IMR-90 (cell line): ENCODE measurements at regions of chr4 and their contacts with region 1.

Region 1: GRCh38 chr4:145936142-145936996 is 2.3 kb downstream of the ZNF827 start:
- DNase-seq: peak; percentile 73
- ATAC-seq: peak; percentile 44
- H3K4me3 ChIP-seq: peak overlapping the region; percentile 82
- H3K27ac ChIP-seq: peak overlapping the region; percentile 97
- H3K4me1 ChIP-seq: peaks cover 5% of the 10 kb centered on the region
- H3K27me3 ChIP-seq: no peaks in the 10 kb centered on the region
- CTCF ChIP-seq: peak; percentile 29
- POLR2A ChIP-seq: no peak
- RAD21 ChIP-seq: peak; percentile 10; the same call in 1 of the 2 replicates

Region 2: DNA sequence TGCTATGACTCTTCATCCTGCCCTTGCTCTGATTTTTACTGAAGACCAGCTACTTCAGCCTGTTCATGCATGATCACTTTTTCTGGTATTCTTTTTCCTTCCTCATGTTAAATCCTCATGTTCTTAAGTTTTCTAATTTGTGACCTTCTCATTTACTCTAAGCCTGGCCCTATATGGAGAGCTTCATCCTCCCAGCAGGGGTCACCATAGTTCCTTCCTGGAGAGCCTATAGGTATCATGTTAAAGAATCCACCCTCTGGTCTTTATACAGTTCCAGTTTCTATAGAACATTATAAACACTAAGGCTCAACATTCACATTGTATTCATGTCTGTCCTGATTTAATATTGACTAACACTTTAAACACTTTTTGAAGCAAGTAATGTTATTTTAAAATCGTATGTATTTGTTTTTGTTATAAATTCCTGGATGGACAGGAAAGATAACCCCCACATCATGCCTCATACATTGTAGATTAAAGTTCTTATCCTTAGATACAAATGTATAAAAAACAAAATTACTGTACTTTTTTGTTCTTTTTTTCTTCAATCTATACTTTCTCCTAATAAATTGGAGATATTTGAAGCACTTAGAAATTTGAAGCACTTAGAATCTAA is 702.2 kb before region 1 on chr4:
- CTCF ChIA-PET with region 1: no interaction called
- POLR2A ChIA-PET with region 1: no interaction called
- dilution Hi-C with region 1: no loop called
- in situ Hi-C with region 1: no loop called
- intact Hi-C with region 1: loop called (anchors 10 kb)
- DNase-seq: peak; percentile 67
- ATAC-seq: peak; percentile 93
- H3K4me3 ChIP-seq: no peak overlapping the region
- H3K27ac ChIP-seq: no peak overlapping the region
- H3K4me1 ChIP-seq: 0 out of 2 replicates have a peak, but pooled peaks cover 1% of the 10 kb centered on the region
- H3K27me3 ChIP-seq: no peaks in the 10 kb centered on the region
- CTCF ChIP-seq: peak; percentile 88
- POLR2A ChIP-seq: no peak
- RAD21 ChIP-seq: peak; percentile 83

Region 3: GRCh38 chr4:145679520-145679919 is 256.8 kb before region 1 on chr4:
- CTCF ChIA-PET with region 1: no interaction called
- POLR2A ChIA-PET with region 1: no interaction called
- dilution Hi-C with region 1: no loop called
- in situ Hi-C with region 1: no loop called
- intact Hi-C with region 1: loop called (anchors 5 kb)
- DNase-seq: peak; percentile 97
- ATAC-seq: peak; percentile 97
- H3K4me3 ChIP-seq: no peak overlapping the region
- H3K27ac ChIP-seq: no peak overlapping the region
- H3K4me1 ChIP-seq: peaks cover 2% of the 10 kb centered on the region; the same call in 1 of the 2 replicates
- H3K27me3 ChIP-seq: no peaks in the 10 kb centered on the region
- CTCF ChIP-seq: no peak
- POLR2A ChIP-seq: 0 out of 2 replicates have a peak, but pooled peaks have one; percentile 10
- RAD21 ChIP-seq: no peak

Region 4: GRCh38 chr4:145732895-145733880 is 203.2 kb before region 1 on chr4:
- CTCF ChIA-PET with region 1: no interaction called
- POLR2A ChIA-PET with region 1: no interaction called
- dilution Hi-C with region 1: no loop called
- in situ Hi-C with region 1: no loop called
- intact Hi-C with region 1: loop called (anchors 1 kb)
- DNase-seq: peak; percentile 89
- ATAC-seq: peak; percentile 80
- H3K4me3 ChIP-seq: peak overlapping the region; percentile 57
- H3K27ac ChIP-seq: peak overlapping the region; percentile 92
- H3K4me1 ChIP-seq: peaks cover 28% of the 10 kb centered on the region
- H3K27me3 ChIP-seq: no peaks in the 10 kb centered on the region
- CTCF ChIP-seq: no peak
- POLR2A ChIP-seq: peak; percentile 75
- RAD21 ChIP-seq: no peak

Region 5: DNA sequence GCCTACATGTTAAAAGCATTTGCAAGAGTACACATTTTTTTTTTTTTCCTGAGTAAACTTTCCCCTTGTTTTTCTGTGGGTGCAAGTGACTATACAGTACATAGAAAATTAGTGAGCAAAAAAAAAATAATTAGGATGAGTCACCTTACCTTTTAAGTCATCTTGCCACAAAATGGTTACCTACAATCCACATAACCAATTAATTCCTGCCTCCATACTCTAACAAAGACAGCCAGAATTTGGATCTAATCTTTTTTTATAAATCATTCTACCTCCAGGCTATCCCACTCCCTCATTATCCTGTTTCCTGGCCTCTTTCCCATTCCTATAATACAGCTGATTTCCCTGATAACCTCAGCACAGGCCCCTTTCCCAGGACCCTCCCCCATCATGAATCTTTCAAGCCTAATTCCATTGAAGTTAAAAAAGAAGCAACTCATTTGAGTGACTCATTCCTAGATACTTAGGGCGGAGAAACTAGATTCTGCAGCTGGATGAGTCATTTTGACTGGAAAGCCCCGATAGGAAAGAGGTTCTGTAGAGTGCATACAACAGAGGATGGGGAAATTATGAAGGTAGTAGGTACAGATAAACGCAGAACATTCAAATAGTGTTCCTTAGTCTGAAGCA is 128.2 kb before region 1 on chr4:
- CTCF ChIA-PET with region 1: no interaction called
- POLR2A ChIA-PET with region 1: no interaction called
- dilution Hi-C with region 1: no loop called
- in situ Hi-C with region 1: no loop called
- intact Hi-C with region 1: loop called (anchors 2 kb)
- DNase-seq: peak; percentile 98
- ATAC-seq: peak; percentile 79
- H3K4me3 ChIP-seq: no peak overlapping the region
- H3K27ac ChIP-seq: peak overlapping the region; percentile 85
- H3K4me1 ChIP-seq: peaks cover 8% of the 10 kb centered on the region
- H3K27me3 ChIP-seq: no peaks in the 10 kb centered on the region
- CTCF ChIP-seq: no peak
- POLR2A ChIP-seq: no peak
- RAD21 ChIP-seq: no peak

Region 6: DNA sequence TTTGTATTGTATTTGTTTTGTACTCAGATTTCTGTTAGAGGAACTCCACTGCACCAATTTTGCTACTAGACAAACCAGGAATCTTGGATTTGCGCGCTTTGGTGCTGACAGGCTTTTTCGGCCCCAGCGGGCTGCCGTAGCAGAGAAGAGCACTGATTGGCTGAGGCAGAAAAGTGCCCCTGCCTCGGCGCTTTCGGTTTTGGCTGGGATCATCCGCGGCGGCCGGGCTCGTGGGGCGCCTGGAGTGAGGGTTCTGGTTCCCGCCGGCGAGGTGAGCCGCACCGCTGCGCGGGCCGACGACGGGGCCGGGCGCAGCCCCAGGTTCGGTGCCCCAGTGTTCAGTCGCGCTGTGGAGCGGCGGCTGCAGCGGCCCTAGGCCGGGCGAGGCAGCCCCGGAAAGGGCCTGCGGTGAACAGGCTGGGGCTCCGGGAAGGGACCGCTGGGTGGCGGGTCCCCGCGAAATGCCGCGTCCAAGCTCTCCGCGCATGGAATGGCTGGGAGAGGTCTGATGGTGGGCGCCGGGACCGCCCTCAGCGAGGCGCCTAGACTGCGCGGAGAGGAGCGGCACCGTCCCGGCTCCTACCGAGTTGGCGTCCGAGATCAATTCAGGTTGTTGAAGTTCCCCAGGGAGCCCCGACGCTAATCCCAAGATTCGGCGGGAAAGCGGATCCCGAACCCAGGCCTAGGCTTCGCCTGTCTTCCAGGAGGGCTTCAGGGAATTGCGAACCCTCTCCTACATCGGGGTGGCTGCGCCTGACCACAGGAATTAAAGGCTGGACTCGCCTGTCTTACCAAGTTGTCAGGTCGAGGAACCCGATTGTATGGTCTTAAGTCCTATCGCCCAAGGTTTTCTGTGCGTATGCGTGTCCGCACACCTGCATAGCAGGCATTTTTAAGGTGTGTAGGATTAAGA is 239.4 kb after region 1 on chr4 and contains the start of gene LSM6:
- CTCF ChIA-PET with region 1: no interaction called
- POLR2A ChIA-PET with region 1: no interaction called
- dilution Hi-C with region 1: no loop called
- in situ Hi-C with region 1: no loop called
- intact Hi-C with region 1: loop called (anchors 5 kb)
- DNase-seq: peak; percentile 85
- ATAC-seq: peak; percentile 96
- H3K4me3 ChIP-seq: peak within 1 kb of the TSS; percentile 60
- H3K27ac ChIP-seq: peak within 1 kb of the TSS; percentile 53
- H3K4me1 ChIP-seq: peaks cover 3% of the 10 kb centered on the region; the same call in 1 of the 2 replicates
- H3K27me3 ChIP-seq: no peaks in the 10 kb centered on the region
- CTCF ChIP-seq: 0 out of 2 replicates have a peak, but pooled peaks have one; percentile 5
- POLR2A ChIP-seq: no peak
- RAD21 ChIP-seq: no peak
- total RNA-seq, gene LSM6: 13.4 and 33.1 TPM in 2 replicates

Region 7: DNA sequence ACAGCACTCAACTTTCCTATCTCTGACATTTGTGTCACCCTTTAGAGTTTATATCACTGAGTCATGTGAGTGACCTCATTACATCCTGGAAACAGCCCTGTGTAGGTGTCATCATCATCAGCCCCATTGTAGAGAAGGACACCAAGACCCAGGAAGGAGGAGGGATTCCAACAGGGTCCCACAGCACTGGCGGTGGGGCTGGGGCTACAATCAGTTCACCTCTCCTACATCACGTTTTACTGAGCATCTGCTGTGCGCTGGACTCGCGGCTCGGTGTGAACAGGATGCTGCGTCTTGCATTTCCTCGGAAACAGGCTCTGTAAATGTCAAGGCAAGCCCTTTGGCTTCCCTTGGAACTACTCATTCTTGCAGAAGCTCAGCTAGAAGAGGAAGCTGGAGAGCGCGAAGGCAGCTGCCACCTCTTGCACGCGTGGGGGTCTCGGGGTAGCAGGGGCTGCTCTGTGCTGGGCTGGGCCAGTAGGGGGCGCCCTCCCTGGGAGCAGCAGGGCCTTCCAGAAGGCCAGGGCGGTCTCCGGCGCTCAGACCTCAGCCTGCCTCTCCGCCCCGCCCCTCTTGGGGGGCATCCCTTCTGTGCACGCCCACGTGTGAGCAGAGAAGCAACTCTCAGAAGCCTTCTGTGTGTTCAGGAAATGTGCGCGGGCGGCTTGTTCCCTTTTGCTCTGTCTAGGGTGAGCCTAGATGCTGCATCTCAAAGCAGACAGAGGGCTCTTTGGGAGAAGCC is 306.9 kb after region 1 on chr4:
- CTCF ChIA-PET with region 1: no interaction called
- POLR2A ChIA-PET with region 1: no interaction called
- dilution Hi-C with region 1: no loop called
- in situ Hi-C with region 1: no loop called
- intact Hi-C with region 1: loop called (anchors 1 kb)
- DNase-seq: peak; percentile 37
- ATAC-seq: no peak
- H3K4me3 ChIP-seq: no peak overlapping the region
- H3K27ac ChIP-seq: no peak overlapping the region
- H3K4me1 ChIP-seq: peaks cover 11% of the 10 kb centered on the region
- H3K27me3 ChIP-seq: no peaks in the 10 kb centered on the region
- CTCF ChIP-seq: 0 out of 2 replicates have a peak, but pooled peaks have one; percentile 4
- POLR2A ChIP-seq: no peak
- RAD21 ChIP-seq: no peak

Region 8: GRCh38 chr4:146310319-146311021 is 374.1 kb after region 1 on chr4:
- CTCF ChIA-PET with region 1: no interaction called
- POLR2A ChIA-PET with region 1: no interaction called
- dilution Hi-C with region 1: no loop called
- in situ Hi-C with region 1: no loop called
- intact Hi-C with region 1: no loop called
- DNase-seq: no peak
- ATAC-seq: no peak
- H3K4me3 ChIP-seq: no peak overlapping the region
- H3K27ac ChIP-seq: no peak overlapping the region
- H3K4me1 ChIP-seq: no peaks in the 10 kb centered on the region; the same call in 1 of the 2 replicates
- H3K27me3 ChIP-seq: no peaks in the 10 kb centered on the region
- CTCF ChIP-seq: no peak
- POLR2A ChIP-seq: no peak
- RAD21 ChIP-seq: no peak